AG04449 (cell line): ENCODE measurements at regions of chr19 and their contacts with region 1.

Region 1: DNA sequence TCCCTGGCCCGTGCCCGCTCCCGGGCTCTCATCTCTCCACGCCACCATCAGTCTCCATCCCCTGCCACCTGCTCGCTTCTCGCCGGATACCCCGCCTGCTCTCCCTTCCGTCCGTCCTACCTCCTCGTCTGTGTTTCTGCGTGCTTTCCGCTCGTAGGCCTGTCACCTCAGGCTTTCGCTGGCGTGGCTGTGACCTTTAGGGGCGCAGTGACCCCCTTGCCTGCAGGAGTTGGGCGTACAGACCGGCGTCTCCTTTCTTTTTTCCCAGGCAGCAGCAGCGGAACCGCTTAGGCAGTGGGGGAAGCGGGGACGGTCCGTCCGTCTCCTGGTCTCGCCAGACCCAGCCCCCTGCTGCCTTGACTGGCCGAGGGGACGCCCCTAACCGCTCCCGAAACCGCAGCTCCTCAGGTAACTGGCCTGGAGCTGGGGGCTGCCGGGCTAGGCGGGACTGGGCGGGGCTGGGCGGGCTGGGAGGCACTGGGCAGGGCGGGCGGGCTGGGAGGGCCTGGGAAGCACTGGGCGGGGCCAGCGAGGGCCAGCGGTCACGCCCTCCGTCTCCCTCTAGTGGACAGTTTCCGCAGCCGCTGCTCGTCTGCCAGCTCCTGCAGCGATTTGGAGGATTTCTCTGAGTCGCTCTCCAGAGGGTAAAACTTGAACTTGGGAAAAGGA is 6.3 kb downstream of the PGLYRP1 start:
- DNase-seq: no peak
- H3K4me3 ChIP-seq: peak overlapping the region; percentile 62
- CTCF ChIP-seq: peak; percentile 89

Region 2: DNA sequence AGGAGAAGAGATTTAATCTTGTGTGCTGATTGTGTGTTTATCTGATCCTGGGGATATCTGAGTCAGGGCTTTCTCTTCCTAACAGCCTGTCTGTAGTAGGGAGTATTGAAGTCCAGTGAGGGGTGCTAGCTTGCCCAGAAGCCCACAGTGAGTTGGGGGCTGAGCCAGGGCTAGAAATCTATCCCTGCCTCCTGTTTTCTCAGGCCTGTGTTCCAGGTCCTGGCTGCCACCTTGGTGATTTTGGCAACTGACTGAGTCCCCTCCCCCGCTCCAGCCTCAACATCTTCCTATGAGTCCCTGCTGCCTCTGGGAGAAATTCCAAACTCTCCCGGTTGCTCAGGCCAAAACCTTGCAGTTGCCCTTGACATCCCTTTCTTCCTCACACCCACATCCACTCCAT is 35.2 kb before region 1 on chr19:
- CTCF ChIA-PET with region 1: no interaction called
- POLR2A ChIA-PET with region 1: no interaction called
- DNase-seq: no peak
- H3K4me3 ChIP-seq: no peak overlapping the region
- CTCF ChIP-seq: no peak

Region 3: DNA sequence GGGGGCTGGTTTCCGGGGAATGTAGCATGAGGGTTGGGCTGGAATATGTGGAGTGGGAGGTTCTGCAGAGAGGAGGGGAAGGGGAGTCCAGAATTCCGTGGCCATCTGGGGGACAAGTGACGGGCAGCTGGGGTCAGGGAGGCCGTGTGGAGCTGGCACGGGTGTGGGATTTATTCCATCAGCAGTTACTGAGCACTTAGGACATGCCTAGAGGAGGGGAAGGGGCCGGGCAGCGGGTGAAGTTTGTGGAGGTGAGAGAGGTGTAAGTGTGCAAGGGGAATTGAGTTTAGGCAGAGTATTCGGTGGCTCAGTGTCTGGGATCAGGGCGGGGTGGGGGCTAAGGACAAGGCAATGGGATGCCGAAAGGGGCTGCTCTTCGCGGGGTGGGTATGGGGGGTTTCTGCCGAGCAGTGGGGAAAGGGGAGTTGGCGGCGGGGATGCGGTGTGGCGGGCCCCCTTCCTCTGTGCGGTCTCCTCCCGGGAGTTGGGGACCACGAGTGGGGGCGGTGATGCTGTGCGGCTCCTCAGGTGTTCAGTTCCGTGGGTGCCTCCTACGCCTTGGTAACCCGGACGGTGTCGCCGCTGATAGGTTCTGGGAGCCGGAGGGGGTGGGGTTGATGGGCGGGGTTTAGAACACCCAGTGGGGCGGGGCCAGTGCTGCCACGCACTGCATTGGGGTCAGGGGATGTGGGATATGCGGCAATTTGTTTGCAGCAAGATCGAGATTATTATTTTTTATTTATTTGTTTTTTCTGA is 15.9 kb before region 1 on chr19:
- CTCF ChIA-PET with region 1: interaction called, 32 read pairs
- POLR2A ChIA-PET with region 1: no interaction called
- DNase-seq: no peak
- H3K4me3 ChIP-seq: peak overlapping the region; percentile 6; the same call in 1 of the 2 replicates
- CTCF ChIP-seq: no peak

Region 4: DNA sequence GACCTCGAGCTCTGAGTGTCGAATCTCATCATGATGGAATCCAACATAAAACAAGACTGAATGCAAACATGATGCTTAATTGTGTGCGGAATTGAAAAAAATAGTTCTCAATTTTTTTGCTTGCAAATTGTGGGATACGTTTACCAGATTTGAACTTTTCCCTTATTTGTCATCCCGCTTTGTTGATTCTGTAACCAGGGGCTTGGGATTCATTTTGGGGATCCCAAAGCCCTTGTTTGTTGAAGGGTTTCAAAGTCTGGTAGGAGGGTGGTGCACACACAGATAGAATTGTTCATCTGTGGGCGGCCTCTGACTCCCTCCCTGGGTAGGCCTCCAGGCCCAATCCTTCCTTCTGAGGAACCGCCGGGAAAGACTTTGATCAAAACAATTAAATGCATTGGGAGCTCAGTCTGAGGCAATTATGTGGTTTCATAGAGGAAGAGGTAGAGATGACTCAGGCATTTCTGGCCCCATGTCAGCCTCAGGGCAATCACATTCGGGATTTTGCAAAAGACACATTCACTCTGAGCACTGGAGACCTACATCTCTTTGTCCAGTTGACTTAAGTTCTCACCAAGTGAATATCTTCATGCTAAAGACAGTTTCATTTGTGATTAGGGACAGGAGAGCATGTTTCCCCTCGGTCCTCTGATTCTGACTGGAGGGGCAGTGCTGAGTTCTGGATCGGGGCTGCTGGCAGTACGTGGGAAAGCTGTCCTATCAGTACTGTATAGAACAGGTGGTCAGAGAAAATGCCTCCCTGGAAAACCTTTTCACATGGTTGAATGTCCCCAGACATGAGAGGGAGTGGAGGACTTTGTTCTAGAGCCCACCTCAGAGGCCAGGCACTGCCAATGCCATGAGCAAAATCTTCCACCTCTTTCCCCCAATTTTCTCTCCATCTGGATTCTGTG is 52.0 kb after region 1 on chr19:
- CTCF ChIA-PET with region 1: interaction called, 14 read pairs
- POLR2A ChIA-PET with region 1: no interaction called
- DNase-seq: peak; percentile 52
- H3K4me3 ChIP-seq: no peak overlapping the region
- CTCF ChIP-seq: no peak